Right cardiac atrium (tissue), 5 donors: ENCODE measurements at regions of chr3 and their contacts with region 1.

Region 1: DNA sequence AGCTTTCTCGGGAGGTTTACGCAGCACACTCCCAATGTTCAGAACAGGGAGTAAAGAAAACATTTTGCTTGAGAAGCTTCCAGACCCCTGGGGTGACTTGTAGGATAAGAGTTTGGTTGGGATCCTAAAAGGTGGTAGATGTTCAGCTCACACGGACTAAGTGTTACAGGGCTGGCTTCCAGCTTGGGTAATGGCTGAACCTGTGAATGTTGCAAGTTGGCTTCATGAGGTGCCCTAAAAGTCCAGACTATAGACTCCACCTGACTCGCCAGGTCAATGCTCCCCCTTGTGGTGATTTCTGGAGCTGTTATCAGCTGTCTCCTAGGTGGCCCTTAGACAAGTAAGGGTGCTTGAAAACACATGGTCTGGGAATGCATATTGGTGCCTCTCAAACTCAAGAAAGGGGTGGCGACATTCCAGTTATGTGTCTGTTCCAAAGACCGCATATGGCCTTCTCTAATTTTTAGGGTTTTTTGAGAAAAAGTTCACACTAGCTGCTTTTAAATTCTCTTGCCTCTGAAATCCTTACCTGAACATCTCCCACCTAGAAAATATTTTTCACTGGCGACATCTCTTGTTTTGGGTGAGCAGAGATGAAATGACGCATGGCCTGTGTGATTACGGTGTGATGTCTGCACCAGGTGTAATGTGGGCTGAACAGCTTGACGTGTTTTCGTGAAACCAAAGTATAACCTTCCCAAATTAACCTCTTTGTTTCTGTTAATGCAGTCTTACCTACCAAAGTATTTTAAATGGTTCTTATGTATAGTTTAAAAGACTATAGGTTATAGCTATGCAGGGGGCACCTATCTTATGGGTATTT is 175.7 kb upstream of the KBTBD8 start:
- DNase-seq: peak; percentile 40 to 53 (median 43)
- ATAC-seq: peak; percentile 72 to 76
- H3K4me3 ChIP-seq: no peak overlapping the region
- H3K27ac ChIP-seq: no peak overlapping the region
- H3K4me1 ChIP-seq: no peaks in the 10 kb centered on the region
- H3K27me3 ChIP-seq: no peaks in the 10 kb centered on the region

Region 2: GRCh38 chr3:66253790-66254620 is 568.4 kb before region 1 on chr3:
- intact Hi-C with region 1: loop called (anchors 5 to 10 kb)
- DNase-seq: no peak
- ATAC-seq: no peak
- H3K4me3 ChIP-seq: no peak overlapping the region
- H3K27ac ChIP-seq: no peak overlapping the region
- H3K4me1 ChIP-seq: no peaks in the 10 kb centered on the region
- H3K27me3 ChIP-seq: no peaks in the 10 kb centered on the region

Region 3: DNA sequence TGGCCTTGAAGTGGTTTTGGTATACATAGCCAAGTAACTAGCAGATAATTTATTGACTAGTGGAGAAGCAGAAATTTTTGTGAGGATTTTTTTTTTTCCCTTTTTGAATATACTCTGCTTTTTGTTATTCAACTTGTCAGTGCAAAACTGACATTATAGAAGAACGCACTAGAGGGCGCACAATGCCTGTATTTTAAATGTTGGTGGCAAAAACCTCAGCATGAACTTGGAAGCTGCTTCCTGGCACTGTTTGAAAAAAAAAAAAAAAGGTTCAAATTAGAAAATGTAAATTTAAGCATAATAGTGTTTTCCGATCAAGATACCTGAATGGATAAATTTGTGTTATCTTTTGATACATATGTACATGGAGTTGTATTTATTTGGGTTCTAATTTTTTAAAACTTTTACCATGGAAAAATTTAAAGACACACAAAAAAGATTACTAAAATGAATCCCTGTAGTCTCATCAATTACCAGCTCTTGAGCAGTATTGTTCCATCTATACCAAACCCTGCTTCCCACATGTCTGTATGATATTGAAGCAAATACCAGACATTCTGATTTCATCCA is 545.6 kb before region 1 on chr3:
- intact Hi-C with region 1: loop called (anchors 2 to 5 kb)
- DNase-seq: peak in 1 of 3 donors; percentile 23
- ATAC-seq: peak in 1 of 2 donors; percentile 39
- H3K4me3 ChIP-seq: no peak overlapping the region
- H3K27ac ChIP-seq: no peak overlapping the region
- H3K4me1 ChIP-seq: no peaks in the 10 kb centered on the region
- H3K27me3 ChIP-seq: no peaks in the 10 kb centered on the region

Region 4: DNA sequence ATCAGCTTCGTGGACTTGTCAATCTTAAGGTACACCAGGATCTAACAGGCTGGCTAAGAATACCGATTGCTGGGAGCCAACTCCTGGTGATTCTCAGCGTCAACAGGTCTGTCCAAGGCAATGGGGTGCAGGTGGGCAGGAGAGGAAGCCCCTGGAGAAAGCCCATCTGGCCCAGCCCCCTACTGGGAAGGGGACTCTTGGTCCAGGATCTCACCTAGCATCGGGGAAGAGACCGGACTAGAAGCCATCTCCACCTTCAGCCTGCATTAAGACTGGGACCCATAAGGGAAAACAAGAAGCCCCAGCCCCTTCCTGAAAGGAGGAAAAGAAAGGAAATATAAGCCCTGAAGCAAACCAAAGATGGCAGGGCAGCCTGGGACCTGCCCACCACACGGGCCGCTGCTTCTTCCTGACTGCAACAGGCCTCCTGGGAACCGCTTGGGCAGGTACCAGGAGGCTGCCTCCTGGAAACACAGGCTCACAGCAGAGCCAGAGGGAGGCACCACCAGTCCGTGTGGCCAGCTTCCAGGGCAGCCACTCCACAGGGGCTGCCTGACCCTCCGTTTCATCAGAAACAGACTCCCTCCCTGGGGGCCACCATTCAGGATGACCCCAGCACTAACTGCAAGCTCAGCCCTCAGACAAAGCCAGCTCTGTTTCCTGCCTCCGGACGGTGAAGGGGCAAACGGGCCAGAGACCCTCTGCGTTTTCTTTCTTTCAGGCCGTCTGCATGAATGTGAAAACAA is 421.8 kb before region 1 on chr3:
- intact Hi-C with region 1: loop called (anchors 2 to 10 kb)
- DNase-seq: no peak
- ATAC-seq: peak in 1 of 2 donors; percentile 11
- H3K4me3 ChIP-seq: no peak overlapping the region
- H3K27ac ChIP-seq: no peak overlapping the region
- H3K4me1 ChIP-seq: no peaks in the 10 kb centered on the region
- H3K27me3 ChIP-seq: no peaks in the 10 kb centered on the region

Region 5: GRCh38 chr3:66762916-66763710 is 59.3 kb before region 1 on chr3:
- intact Hi-C with region 1: no loop called
- DNase-seq: no peak
- ATAC-seq: peak in 1 of 2 donors; percentile 34
- H3K4me3 ChIP-seq: no peak overlapping the region
- H3K27ac ChIP-seq: no peak overlapping the region
- H3K4me1 ChIP-seq: no peaks in the 10 kb centered on the region
- H3K27me3 ChIP-seq: no peaks in the 10 kb centered on the region

Region 6: GRCh38 chr3:66778777-66779176 is 43.6 kb before region 1 on chr3:
- intact Hi-C with region 1: no loop called
- DNase-seq: no peak
- ATAC-seq: no peak
- H3K4me3 ChIP-seq: no peak overlapping the region
- H3K27ac ChIP-seq: no peak overlapping the region
- H3K4me1 ChIP-seq: no peaks in the 10 kb centered on the region
- H3K27me3 ChIP-seq: no peaks in the 10 kb centered on the region